ENCODE measurements at regions of chr10 and their contacts with region 1.

Region 1: GRCh38 chr10:131474416-131474815 is 162.9 kb upstream of the TCERG1L start:
- DNase-seq: no peak
- ATAC-seq: no peak
- H3K4me3 ChIP-seq: no peak overlapping the region
- H3K27ac ChIP-seq: no peak overlapping the region
- H3K4me1 ChIP-seq: no peaks in the 10 kb centered on the region
- H3K27me3 ChIP-seq: no peaks in the 10 kb centered on the region
- CTCF ChIP-seq: no peak
- POLR2A ChIP-seq: no peak
- RAD21 ChIP-seq: no peak

Region 2: DNA sequence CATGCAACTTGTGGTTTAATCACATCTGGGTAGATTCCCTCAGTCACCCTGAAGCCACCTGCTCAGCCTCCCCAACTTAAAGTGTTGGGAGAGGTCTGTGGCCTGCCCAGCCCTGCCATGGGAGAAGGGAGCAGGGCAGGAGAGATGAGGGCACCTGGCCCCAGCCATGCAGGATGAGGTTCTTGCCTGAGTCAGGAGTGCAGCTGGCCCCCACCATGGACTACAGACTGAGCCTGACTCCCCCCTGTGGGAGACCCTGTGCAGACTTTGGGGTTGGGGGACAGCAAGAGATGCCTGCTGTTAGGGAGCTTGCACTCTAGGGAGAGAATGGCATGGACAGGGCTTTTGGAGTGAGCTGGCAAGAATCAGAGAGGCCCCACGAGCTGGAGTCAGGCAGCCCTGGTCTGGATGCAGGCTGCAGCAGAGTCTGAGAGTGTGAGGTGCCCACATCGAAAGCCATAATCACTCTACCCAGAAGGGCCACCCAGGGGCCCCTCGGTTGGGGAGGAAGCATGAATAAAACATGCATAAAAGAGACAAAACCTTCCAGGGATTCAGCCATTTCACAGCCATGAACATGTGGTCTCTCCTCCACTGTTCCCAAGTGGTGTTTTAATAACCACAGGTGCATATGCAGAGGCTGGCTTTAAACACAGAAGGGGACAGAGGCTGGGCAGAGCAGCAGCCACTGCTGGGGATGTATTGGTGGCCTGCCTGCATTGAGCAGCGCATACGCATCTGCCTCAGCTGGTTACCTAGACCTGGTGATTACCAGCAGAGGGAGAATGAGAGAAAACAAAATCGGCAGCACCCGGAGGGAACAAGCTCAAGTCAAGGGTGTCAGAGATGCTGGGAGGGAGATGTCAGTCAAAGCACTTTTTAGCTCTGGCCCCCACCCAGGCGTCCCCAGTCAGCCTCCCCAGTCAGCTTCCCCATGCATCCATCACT is 677.8 kb after region 1 on chr10:
- CTCF ChIA-PET with region 1: no interaction called
- POLR2A ChIA-PET with region 1: interaction called, 16 read pairs
- dilution Hi-C with region 1: no loop called
- in situ Hi-C with region 1: no loop called
- intact Hi-C with region 1: no loop called
- DNase-seq: no peak
- ATAC-seq: no peak
- H3K4me3 ChIP-seq: no peak overlapping the region
- H3K27ac ChIP-seq: no peak overlapping the region
- H3K4me1 ChIP-seq: no peaks in the 10 kb centered on the region
- H3K27me3 ChIP-seq: peaks cover 2% of the 10 kb centered on the region; the same call in 1 of the 2 replicates
- CTCF ChIP-seq: no peak
- POLR2A ChIP-seq: no peak
- RAD21 ChIP-seq: no peak